Activated naive CD4-positive, alpha-beta T cell treated with anti-CD3 and anti-CD28 coated beads for 36 hours (primary cell): ENCODE measurements at regions of chrX and their contacts with region 1.

Region 1: DNA sequence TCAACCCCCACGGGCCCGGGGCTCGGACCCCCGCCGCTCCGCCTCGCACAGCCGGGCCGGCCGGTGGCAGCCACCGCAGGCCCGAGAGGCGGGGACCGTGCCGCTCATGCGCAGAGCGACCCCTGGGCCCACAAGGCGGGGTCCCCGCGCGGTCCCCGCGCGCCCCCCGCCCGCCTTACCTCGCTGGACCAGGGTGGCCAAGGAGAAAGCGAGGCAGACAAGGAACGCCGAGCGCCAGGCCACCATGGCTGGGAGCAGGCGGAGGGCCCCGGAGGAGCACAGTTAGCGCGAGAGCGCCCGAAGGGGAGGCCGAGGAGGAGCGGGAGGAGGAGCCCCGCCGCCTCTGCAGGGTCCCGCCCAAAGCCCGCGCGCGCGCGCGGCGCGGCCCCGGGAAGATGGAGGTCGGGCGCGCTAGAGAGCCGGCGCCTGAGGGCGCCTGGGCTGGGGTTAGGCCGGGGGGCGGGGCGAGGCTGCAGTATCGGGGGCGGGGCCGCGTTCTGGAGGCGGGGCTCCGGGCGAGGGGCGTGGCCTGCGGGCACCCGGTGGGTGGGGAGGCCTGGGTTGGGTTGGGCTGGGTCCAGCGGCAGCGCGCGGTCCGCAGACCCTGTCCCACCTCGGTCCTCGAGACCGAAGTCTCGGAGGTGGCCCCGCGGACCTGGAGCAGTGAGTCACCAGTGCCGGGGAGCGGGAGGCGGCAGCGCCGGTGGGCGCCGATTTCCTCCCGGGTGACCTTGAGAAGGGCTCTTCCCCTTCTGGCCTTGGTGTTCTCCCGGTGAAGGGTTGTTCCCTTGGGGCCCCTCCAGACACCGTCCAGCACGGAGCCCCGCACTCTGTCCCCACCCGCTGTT is at the start of gene CD99L2:
- DNase-seq: peak; percentile 88
- H3K4me3 Mint-ChIP-seq: peak within 1 kb of the TSS; percentile 75
- H3K27ac Mint-ChIP-seq: peak within 1 kb of the TSS; percentile 50
- H3K4me1 Mint-ChIP-seq: peaks cover 10% of the 10 kb centered on the region
- H3K27me3 Mint-ChIP-seq: no peaks in the 10 kb centered on the region
- total RNA-seq, gene CD99L2: 11.3 to 11.7 TPM

Region 2: GRCh38 chrX:150568320-150569154 is 330.0 kb before region 1 on chrX and contains the start of gene MTM1:
- CTCF ChIA-PET with region 1: no interaction called
- intact Hi-C with region 1: loop called (anchors 1 kb)
- DNase-seq: peak; percentile 93
- H3K4me3 Mint-ChIP-seq: peak within 1 kb of the TSS; percentile 78
- H3K27ac Mint-ChIP-seq: peak within 1 kb of the TSS; percentile 97
- H3K4me1 Mint-ChIP-seq: peaks cover 32% of the 10 kb centered on the region
- H3K27me3 Mint-ChIP-seq: no peaks in the 10 kb centered on the region
- total RNA-seq, gene MTM1: 17.8 to 19.2 TPM

Region 3: GRCh38 chrX:150772150-150772970 is 126.2 kb before region 1 on chrX:
- CTCF ChIA-PET with region 1: no interaction called
- intact Hi-C with region 1: loop called (anchors 2 kb)
- DNase-seq: peak; percentile 84
- H3K4me3 Mint-ChIP-seq: no peak overlapping the region
- H3K27ac Mint-ChIP-seq: no peak overlapping the region
- H3K4me1 Mint-ChIP-seq: peaks cover 6% of the 10 kb centered on the region
- H3K27me3 Mint-ChIP-seq: no peaks in the 10 kb centered on the region

Region 4: DNA sequence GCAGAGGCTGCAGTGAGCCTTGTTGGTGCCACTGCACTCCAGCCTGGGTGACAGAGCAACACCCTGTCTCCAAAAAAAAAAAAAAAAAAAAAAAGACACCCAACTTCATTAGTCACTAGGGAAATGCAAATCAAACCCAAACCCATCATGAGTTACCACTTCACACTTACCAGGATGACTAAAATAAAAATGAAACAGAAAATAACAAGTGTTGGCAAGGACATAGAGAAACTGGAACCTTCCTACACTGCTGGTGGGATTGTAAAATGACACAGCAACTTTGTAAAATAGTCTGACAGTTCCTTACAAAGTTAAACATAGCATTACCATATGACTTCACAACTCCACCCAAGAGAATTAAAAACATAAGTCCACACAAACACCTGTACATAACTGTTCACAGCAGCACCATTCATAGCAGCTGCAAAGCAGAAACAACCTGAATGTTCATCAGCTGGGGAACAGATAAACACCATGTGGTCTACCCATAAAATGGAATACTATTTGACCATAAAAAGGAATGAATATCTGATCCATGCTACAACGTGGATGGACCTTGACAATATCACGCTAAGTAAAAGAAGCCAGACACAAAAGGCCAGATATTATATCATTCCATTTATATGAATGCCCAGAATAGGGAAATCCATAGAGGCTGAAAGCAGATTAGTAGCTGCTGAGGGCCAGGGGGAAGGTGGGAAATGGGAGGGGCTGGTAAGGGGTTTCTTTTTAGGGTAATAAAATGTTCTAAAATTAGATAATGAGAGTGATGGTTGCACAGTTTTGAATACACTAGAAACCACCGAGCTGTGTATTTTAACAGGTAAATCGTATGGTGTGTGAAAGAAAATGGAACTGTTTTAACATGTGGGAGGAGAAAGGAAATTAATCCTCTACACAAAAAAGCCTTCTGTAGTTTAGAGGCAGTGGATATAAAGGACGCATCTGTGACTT is 18.4 kb before region 1 on chrX:
- CTCF ChIA-PET with region 1: no interaction called
- intact Hi-C with region 1: loop called (anchors 1 kb)
- DNase-seq: peak; percentile 8
- H3K4me3 Mint-ChIP-seq: no peak overlapping the region
- H3K27ac Mint-ChIP-seq: peak overlapping the region; percentile 54
- H3K4me1 Mint-ChIP-seq: peaks cover 36% of the 10 kb centered on the region
- H3K27me3 Mint-ChIP-seq: no peaks in the 10 kb centered on the region

Region 5: GRCh38 chrX:151019856-151020255 is 121.3 kb after region 1 on chrX:
- CTCF ChIA-PET with region 1: no interaction called
- intact Hi-C with region 1: no loop called
- DNase-seq: no peak
- H3K4me3 Mint-ChIP-seq: no peak overlapping the region
- H3K27ac Mint-ChIP-seq: no peak overlapping the region
- H3K4me1 Mint-ChIP-seq: no peaks in the 10 kb centered on the region
- H3K27me3 Mint-ChIP-seq: no peaks in the 10 kb centered on the region

Region 6: DNA sequence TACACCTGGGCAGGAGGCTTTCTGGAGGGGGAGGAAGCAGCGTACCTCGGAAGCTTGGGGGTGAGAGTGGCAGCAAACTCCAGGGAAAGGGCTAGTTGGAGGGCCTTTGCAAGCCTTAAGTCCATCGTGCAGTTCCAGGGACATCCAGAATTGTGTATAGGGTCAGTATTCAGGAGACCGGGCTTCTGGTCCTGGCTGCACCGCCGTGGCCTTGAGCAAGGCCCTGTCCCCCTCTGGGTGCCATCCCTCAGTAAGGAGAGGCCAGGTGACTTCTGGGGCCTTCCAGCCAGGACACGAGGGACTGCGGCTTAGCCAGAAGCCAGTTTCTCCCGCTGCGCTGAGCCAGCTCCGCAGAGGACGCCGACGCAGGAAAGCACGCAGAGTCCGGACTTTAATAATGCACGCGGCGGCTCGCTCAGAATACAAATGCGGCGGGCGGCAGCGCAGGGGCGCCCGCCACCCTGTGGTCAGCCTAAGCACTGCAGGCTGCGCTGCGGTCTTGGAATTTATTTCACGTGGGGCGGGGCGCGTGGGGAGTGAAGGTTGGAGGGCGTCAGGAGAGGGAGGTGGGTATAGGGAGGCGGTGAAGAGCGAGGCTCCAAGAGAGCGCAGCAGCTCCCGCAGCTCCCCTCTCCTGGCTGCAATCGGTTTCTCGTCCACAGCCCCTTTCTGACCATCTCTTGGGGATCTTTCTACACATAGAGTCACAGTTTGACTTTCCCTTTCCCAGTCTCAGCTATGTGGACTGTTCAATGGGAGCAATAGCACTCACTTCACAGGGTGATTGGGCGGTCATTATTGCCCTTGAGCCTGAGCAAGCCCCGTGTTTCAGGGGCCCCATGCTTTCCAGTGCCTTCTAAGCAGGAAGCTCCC is 183.7 kb after region 1 on chrX:
- CTCF ChIA-PET with region 1: no interaction called
- intact Hi-C with region 1: loop called (anchors 5 kb)
- DNase-seq: peak; percentile 61
- H3K4me3 Mint-ChIP-seq: no peak overlapping the region
- H3K27ac Mint-ChIP-seq: no peak overlapping the region
- H3K4me1 Mint-ChIP-seq: peaks cover 2% of the 10 kb centered on the region
- H3K27me3 Mint-ChIP-seq: peaks cover 3% of the 10 kb centered on the region